ENCODE measurements at regions of chr4 and their contacts with region 1.

Region 1: GRCh38 chr4:184825896-184826690 is at the start of gene ACSL1:
- DNase-seq: peak; percentile 75
- H3K4me3 Mint-ChIP-seq: peak within 1 kb of the TSS; percentile 93
- H3K27ac Mint-ChIP-seq: peak within 1 kb of the TSS; percentile 96
- H3K4me1 Mint-ChIP-seq: peaks cover 56% of the 10 kb centered on the region
- H3K27me3 Mint-ChIP-seq: peaks cover 8% of the 10 kb centered on the region
- total RNA-seq, gene ACSL1: 56.7 and 61.8 TPM in 2 replicates

Region 2: GRCh38 chr4:183444214-183445066 is 1381.7 kb before region 1 on chr4 and contains the start of gene CDKN2AIP:
- intact Hi-C with region 1: loop called (anchors 5 kb)
- DNase-seq: peak; percentile 93
- H3K4me3 Mint-ChIP-seq: peak within 1 kb of the TSS; percentile 99
- H3K27ac Mint-ChIP-seq: peak within 1 kb of the TSS; percentile 99
- H3K4me1 Mint-ChIP-seq: peaks cover 42% of the 10 kb centered on the region
- H3K27me3 Mint-ChIP-seq: peaks cover 2% of the 10 kb centered on the region
- total RNA-seq, gene CDKN2AIP: 23.9 and 24.1 TPM in 2 replicates

Region 3: GRCh38 chr4:184310171-184310567 is 515.9 kb before region 1 on chr4:
- intact Hi-C with region 1: loop called (anchors 10 kb)
- DNase-seq: no peak
- H3K4me3 Mint-ChIP-seq: peak overlapping the region; percentile 34
- H3K27ac Mint-ChIP-seq: peak overlapping the region; percentile 74
- H3K4me1 Mint-ChIP-seq: peaks cover 65% of the 10 kb centered on the region
- H3K27me3 Mint-ChIP-seq: no peaks in the 10 kb centered on the region

Region 4: DNA sequence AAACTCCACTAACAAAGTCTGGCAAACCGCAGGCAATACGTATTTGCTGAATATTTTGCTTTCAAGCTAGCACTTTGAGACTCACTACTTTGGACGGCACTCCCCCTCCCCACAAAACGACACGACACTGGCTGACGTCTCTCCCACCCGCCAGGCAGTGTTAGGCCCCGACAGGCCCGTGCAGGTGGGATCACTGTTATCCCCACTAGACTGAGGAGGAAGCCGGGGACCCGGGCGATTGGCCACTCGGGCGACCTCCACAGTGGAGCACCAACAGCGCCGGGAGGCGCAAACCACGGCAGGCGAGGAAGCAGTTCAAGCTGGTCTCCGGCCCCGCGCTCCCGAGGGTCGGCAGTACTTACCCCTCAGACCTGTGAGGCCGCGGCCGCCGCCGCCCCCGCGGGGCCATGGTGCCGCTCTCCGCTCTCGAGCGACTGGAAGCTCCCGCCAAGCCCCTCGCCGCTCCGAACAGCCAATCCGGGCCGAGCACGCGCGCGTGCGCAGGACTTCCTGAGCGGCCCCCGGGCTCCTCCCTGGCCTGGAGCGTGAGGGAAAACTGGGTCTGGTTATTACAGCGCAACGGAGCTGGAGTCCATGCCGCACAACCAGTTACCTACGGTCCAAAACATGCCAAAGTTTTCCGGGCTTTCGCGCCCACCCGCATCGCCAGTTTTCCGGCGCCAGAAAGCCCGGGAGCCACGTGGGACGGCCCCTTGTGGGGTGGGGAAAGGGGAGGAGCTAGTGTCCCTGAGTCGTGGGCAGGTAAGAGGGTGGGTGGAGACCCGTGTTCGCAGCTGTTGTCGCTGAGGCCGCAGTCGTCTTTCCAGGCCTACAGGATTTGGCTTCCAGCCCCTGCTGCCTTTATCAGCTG is 92.2 kb before region 1 on chr4 and contains the start of gene CENPU:
- intact Hi-C with region 1: loop called (anchors 1 kb)
- DNase-seq: peak; percentile 96
- H3K4me3 Mint-ChIP-seq: peak within 1 kb of the TSS; percentile 94
- H3K27ac Mint-ChIP-seq: peak within 1 kb of the TSS; percentile 95
- H3K4me1 Mint-ChIP-seq: peaks cover 50% of the 10 kb centered on the region
- H3K27me3 Mint-ChIP-seq: no peaks in the 10 kb centered on the region
- total RNA-seq, gene CENPU: 78.3 and 80.3 TPM in 2 replicates

Region 5: GRCh38 chr4:184845367-184846021 is 19.4 kb after region 1 on chr4:
- intact Hi-C with region 1: loop called (anchors 1 kb)
- DNase-seq: no peak
- H3K4me3 Mint-ChIP-seq: no peak overlapping the region
- H3K27ac Mint-ChIP-seq: no peak overlapping the region
- H3K4me1 Mint-ChIP-seq: peaks cover 9% of the 10 kb centered on the region
- H3K27me3 Mint-ChIP-seq: peaks cover 5% of the 10 kb centered on the region

Region 6: GRCh38 chr4:185165605-185166063 is 339.5 kb after region 1 on chr4:
- intact Hi-C with region 1: loop called (anchors 10 kb)
- DNase-seq: no peak
- H3K4me3 Mint-ChIP-seq: no peak overlapping the region
- H3K27ac Mint-ChIP-seq: peak overlapping the region; percentile 80
- H3K4me1 Mint-ChIP-seq: peaks cover 20% of the 10 kb centered on the region
- H3K27me3 Mint-ChIP-seq: peaks cover 32% of the 10 kb centered on the region

Measured in activated T-helper 1 cell treated with anti-CD3 and anti-CD28 coated beads, Interleukin-12 subunit alpha, Interleukin-12 subunit beta, Interleukin-2, Interleukin-4 antibody, amounts not matched to agents 30 ng/mL and 10 ng/mL and 1 ng/mL, durations not matched to agents 14 hours and 24 hours and 36 hours (primary cell).